ENCODE measurements at regions of chr3 and their contacts with region 1.

Region 1: DNA sequence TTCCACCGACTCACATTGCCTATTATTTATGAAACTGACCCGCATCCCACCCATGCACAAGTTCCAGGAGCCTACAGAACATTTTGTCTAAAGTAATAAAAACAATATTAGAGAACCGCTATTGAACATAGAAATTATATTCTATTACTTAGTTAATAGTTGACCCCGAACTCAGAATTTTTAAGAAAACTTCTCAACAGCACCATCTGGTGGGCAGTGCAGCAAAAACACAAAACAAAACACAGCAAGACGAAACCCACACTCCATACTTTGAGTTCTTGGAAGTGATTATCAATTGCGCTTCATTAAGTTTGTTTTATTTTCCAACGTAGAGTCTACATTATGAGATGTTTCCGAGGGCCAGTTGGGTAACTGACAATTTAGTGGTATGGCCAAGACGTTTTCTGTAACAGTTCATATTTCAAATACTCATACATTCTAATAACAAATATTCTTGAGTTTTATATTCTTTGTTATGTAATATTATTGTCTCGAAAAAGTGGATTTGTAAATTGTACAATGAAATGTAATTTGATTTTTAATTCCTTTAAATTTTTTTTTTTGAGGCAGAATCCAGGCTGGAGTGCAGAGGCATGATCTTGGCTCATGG is 24.0 kb upstream of the C3orf70 start:
- DNase-seq: no peak
- H3K4me3 ChIP-seq: no peak overlapping the region
- H3K27me3 ChIP-seq: peaks cover 9% of the 10 kb centered on the region; the same call in 1 of the 2 replicates
- CTCF ChIP-seq: peak; percentile 71

Region 2: DNA sequence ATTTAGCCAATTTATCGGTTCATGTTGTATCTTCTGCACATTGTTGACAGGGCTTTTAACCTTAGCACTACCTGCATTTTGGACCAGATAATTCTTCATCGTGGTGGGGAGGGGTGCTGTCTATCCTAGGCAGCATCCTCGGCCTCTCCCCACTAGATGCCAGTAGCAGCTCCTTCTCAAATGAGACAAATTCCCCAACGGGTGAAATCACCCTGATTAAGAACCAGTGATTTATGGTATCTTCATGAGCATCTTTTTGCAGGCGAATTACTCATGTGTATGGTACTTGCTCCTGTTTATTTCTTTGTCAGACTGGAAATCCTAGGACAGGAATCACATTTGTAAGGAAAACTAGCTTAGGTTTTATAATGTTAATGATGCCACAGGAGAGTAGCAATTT is 92.0 kb before region 1 on chr3:
- CTCF ChIA-PET with region 1: interaction called, 29 read pairs
- POLR2A ChIA-PET with region 1: no interaction called
- DNase-seq: peak; percentile 65
- H3K4me3 ChIP-seq: no peak overlapping the region
- H3K27me3 ChIP-seq: no peaks in the 10 kb centered on the region
- CTCF ChIP-seq: peak; percentile 77

Region 3: GRCh38 chr3:185164428-185165217 is 12.2 kb before region 1 on chr3:
- CTCF ChIA-PET with region 1: interaction called, 10 read pairs
- POLR2A ChIA-PET with region 1: interaction called, 3 read pairs
- DNase-seq: no peak
- H3K4me3 ChIP-seq: no peak overlapping the region
- H3K27me3 ChIP-seq: 0 out of 2 replicates have a peak, but pooled peaks cover 1% of the 10 kb centered on the region
- CTCF ChIP-seq: no peak

Region 4: DNA sequence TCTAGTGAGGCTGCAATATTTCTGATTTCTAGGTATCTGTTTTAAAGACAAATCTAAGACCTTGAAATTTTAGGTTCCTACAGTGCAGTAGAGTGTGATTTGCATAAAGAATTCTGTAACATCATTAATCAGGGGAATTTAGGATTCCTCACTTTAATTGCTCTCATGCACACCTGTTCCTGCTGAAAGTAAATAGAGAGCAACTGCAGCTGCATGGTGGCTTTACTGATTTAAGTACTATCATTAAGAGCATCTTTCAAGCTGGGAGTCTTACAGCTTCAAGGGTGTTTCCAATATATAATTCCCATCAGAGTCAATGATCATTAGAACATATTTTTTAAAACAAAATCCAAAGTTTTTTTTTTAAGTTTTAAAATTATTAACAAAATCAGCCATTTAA is 12.0 kb after region 1 on chr3:
- CTCF ChIA-PET with region 1: interaction called, 15 read pairs
- POLR2A ChIA-PET with region 1: no interaction called
- DNase-seq: no peak
- H3K4me3 ChIP-seq: no peak overlapping the region
- H3K27me3 ChIP-seq: no peaks in the 10 kb centered on the region
- CTCF ChIP-seq: no peak

Region 5: DNA sequence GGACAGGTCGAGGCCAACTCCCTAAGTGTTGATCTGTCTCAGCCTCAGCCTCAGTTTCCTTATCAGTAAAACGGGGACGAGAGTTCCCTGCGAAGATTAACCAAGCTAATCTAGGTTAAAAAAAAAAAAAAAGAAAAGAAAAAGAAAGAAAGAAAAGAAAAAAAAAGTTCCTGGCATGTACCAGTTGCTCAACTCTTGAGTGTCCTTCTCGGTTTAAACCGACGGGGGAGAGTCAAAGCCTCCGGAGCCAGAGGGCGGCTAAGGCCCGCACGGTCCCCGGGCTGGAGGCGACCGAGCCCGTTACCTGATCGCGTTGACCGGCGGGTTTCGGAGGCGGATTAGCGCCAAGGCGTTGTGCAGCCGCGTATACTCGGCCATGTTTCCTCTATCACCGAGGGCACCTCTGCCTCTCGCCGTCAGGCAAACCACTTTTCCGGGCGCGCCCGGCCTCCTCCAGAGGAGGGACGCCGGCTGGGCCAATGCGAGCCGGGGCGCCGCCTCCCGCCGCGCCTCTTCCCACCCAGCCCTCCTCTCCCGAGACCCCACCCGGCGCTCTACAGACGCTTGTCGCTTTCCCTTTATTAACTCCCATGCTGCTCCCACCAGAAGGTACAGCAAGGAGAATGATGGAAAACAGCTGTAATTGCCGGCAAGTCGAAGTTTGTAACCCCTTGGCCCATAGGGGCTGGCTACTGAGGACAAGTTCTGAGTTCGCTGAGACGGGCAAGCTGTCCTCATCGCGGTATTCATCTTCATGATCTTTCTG is 77.0 kb after region 1 on chr3 and contains the start of gene EHHADH:
- CTCF ChIA-PET with region 1: no interaction called
- POLR2A ChIA-PET with region 1: no interaction called
- DNase-seq: no peak
- H3K4me3 ChIP-seq: peak within 1 kb of the TSS; percentile 74
- H3K27me3 ChIP-seq: no peaks in the 10 kb centered on the region
- CTCF ChIP-seq: no peak
- polyA plus RNA-seq, gene EHHADH: 5.2 and 6.0 TPM in 2 replicates

Measured in BJ (cell line).